Right lobe of liver (tissue), 6 donors: ENCODE measurements at regions of chrX and their contacts with region 1.

Region 1: GRCh38 chrX:74536152-74536831 is 78.1 kb downstream of the RLIM start:
- DNase-seq: peak; percentile 82 to 88 (median 83)
- ATAC-seq: peak; percentile 82 to 87 (median 86)
- H3K4me3 ChIP-seq: peak overlapping the region; percentile 41 to 56 (median 53)
- H3K27ac ChIP-seq: peak overlapping the region; percentile 19 to 82 (median 66)
- H3K4me1 ChIP-seq: peaks cover 0 to 3% (median 0%) of the 10 kb centered on the region in 4 donors
- H3K27me3 ChIP-seq: no peaks in the 10 kb centered on the region
- CTCF ChIP-seq: peak in 2 of 4 donors; percentile 16 to 43
- POLR2A ChIP-seq: peak; percentile 35

Region 2: DNA sequence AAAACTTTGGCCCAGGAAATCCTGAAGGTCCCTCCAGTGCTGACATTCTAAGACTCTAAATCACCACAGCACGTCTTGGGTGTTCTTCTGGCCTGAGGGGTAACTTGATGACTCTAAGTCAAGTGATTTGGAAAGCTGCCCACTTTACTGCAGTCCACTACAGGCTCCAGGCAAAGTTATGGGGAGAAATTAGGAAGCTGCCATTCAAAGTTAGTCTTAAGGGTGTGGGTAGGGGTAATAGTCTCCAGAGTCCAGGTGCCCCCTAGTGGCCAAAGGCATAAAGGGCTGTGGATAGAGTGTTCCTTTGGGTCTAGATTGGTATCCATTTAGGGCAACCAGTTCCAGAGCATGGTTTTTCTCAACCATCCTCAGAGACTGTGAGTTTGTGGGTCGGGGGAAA is 153.7 kb before region 1 on chrX:
- intact Hi-C with region 1: loop called (anchors 10 kb)
- DNase-seq: peak in 2 of 3 donors; percentile 56 to 58
- ATAC-seq: peak; percentile 89 to 95 (median 93)
- H3K4me3 ChIP-seq: no peak overlapping the region
- H3K27ac ChIP-seq: no peak overlapping the region
- H3K4me1 ChIP-seq: no peaks in the 10 kb centered on the region
- H3K27me3 ChIP-seq: no peaks in the 10 kb centered on the region
- CTCF ChIP-seq: peak; percentile 69 to 88 (median 77)
- POLR2A ChIP-seq: no peak

Region 3: DNA sequence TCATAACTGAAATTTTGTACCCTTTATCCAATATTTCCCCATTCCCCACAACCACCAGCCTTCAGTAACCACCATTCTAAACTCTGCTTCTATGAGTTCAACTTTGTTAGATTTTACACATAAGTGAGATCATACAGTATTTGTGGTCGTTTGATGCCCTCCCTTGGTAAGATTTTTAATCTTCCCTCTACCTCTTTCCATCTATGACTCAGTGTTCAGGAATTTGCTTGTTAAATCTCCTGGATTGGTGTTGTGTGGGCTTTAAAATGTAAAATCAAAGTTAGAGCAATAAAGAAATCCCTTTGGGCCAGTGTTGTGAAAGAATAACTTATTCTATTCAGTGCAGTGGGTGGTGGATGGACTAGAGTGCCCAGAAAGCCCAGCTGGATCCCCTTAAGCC is 77.6 kb before region 1 on chrX:
- intact Hi-C with region 1: no loop called
- DNase-seq: no peak
- ATAC-seq: peak in 1 of 4 donors; percentile 71
- H3K4me3 ChIP-seq: no peak overlapping the region
- H3K27ac ChIP-seq: no peak overlapping the region
- H3K4me1 ChIP-seq: no peaks in the 10 kb centered on the region
- H3K27me3 ChIP-seq: no peaks in the 10 kb centered on the region
- CTCF ChIP-seq: no peak
- POLR2A ChIP-seq: no peak

Region 4: DNA sequence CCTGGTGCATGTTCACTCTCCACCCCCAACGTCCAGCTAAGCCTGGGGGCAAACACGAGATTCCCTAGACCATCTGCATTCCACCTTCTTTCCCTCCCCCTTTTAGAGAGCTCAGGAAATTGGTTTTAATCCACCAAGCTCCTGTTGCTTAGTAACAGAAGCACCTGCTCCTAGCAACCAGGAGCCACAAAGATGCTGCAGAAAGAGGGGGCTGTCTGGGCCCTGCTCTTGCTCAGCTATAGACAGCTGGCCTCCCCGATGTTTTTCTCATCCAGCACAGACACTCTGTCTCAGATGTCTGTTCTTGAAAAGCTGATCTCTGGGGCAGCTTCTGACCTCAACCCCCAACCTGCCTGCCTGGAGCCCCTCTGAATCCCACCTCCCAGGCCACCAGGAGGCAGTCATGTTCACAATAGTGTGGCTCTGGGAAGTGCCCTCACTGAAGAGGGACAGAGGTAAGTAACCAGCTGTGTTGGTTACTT is 43.5 kb before region 1 on chrX:
- intact Hi-C with region 1: no loop called
- DNase-seq: no peak
- ATAC-seq: peak; percentile 9 to 58 (median 38)
- H3K4me3 ChIP-seq: no peak overlapping the region
- H3K27ac ChIP-seq: no peak overlapping the region
- H3K4me1 ChIP-seq: no peaks in the 10 kb centered on the region
- H3K27me3 ChIP-seq: no peaks in the 10 kb centered on the region
- CTCF ChIP-seq: peak; percentile 10 to 25 (median 21)
- POLR2A ChIP-seq: no peak